ENCODE measurements at regions of chr1 and their contacts with region 1.

Region 1: GRCh38 chr1:78617615-78618026 is 2.6 kb upstream of the IFI44L start:
- DNase-seq: peak; percentile 77
- H3K4me3 ChIP-seq: no peak overlapping the region
- H3K27ac ChIP-seq: no peak overlapping the region
- H3K4me1 ChIP-seq: peaks cover 18% of the 10 kb centered on the region
- H3K27me3 ChIP-seq: no peaks in the 10 kb centered on the region
- CTCF ChIP-seq: peak; percentile 67 to 73
- POLR2A ChIP-seq: no peak

Region 2: GRCh38 chr1:78561856-78562255 is 55.8 kb before region 1 on chr1:
- CTCF ChIA-PET with region 1: no interaction called
- POLR2A ChIA-PET with region 1: no interaction called
- dilution Hi-C with region 1: no loop called
- intact Hi-C with region 1: no loop called
- DNase-seq: no peak
- H3K4me3 ChIP-seq: no peak overlapping the region
- H3K27ac ChIP-seq: no peak overlapping the region
- H3K4me1 ChIP-seq: no peaks in the 10 kb centered on the region
- H3K27me3 ChIP-seq: peaks cover 1 to 2% of the 10 kb centered on the region in 2 experiments
- CTCF ChIP-seq: no peak
- POLR2A ChIP-seq: no peak

Region 3: GRCh38 chr1:78607334-78607927 is 10.2 kb before region 1 on chr1:
- CTCF ChIA-PET with region 1: interaction called, 24 read pairs
- POLR2A ChIA-PET with region 1: no interaction called
- dilution Hi-C with region 1: no loop called
- intact Hi-C with region 1: no loop called
- DNase-seq: peak; percentile 39
- H3K4me3 ChIP-seq: no peak overlapping the region
- H3K27ac ChIP-seq: no peak overlapping the region
- H3K4me1 ChIP-seq: no peaks in the 10 kb centered on the region
- H3K27me3 ChIP-seq: peaks cover 0 to 2% of the 10 kb centered on the region in 2 experiments
- CTCF ChIP-seq: peak; percentile 26 to 37
- POLR2A ChIP-seq: no peak

Region 4: GRCh38 chr1:78658901-78659300 is 41.3 kb after region 1 on chr1:
- CTCF ChIA-PET with region 1: interaction called, 10 read pairs
- POLR2A ChIA-PET with region 1: no interaction called
- dilution Hi-C with region 1: no loop called
- intact Hi-C with region 1: no loop called
- DNase-seq: no peak
- H3K4me3 ChIP-seq: no peak overlapping the region
- H3K27ac ChIP-seq: no peak overlapping the region
- H3K4me1 ChIP-seq: no peaks in the 10 kb centered on the region
- H3K27me3 ChIP-seq: no peaks in the 10 kb centered on the region
- CTCF ChIP-seq: no peak
- POLR2A ChIP-seq: no peak

Region 5: DNA sequence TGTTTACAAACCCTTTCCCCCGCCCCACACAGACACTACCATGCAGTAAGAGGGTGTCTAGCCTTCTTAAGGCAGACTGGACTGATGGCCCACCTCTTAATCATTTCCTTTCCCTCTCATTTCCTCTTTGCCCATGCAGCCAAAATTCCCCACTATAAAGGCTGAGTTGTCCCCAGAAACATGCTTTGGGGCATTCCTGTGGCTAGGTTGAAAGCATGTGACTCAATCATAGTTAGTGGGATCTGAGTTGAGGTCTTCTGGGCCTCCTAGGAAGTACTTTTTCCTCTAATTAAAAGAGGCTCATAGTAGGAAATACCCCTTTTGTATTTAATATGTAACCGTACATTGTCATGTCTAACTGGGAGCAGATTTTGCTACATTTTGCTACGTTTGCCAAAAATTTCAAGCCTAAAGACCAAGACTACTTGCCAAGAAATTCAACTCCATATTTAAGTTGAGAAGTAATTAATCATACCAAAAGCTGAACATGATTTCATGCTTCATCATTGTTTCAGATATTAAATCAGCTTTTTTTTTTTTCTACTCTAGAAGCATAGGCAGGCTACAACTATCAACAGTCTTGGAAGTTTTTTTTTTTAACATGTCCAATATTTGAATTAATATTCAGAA is 214.2 kb after region 1 on chr1:
- CTCF ChIA-PET with region 1: interaction called, 6 read pairs
- POLR2A ChIA-PET with region 1: no interaction called
- dilution Hi-C with region 1: no loop called
- intact Hi-C with region 1: loop called (anchors 5 kb)
- DNase-seq: peak; percentile 78
- H3K4me3 ChIP-seq: no peak overlapping the region
- H3K27ac ChIP-seq: peak overlapping the region; percentile 94
- H3K4me1 ChIP-seq: peaks cover 33% of the 10 kb centered on the region
- H3K27me3 ChIP-seq: no peaks in the 10 kb centered on the region
- CTCF ChIP-seq: no peak
- POLR2A ChIP-seq: no peak

Measured in endothelial cell of umbilical vein (primary cell).